AG04449 (cell line): ENCODE measurements at regions of chr1 and their contacts with region 1.

Region 1: DNA sequence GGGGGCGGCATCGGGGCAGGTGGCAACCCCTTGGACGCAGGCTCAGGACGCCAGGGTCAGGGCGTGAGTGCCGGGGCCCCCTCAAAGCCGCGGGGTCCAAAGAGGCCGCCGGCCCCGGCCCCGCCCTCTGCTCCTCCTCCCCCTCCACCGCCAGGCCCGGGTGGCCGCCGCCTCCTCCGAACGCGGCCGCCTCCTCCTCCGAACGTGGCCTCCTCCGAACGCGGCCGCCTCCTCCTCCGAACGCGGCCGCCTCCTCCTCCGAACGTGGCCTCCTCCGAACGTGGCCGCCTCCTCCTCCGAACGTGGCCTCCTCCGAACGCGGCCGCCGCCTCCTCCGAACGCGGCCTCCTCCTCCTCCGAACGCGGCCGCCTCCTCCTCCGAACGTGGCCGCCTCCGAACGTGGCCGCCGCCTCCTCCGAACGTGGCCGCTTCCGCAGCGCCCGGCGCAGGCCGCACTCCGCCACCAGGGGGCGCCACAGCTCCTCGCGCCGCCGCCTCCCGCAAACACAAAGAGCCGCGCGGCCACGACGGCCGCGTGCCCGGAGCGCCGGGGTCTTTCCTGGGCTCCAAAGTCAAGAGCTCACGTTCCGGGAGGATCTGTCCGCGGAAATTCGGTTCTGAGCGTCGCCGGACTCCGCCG is 19.3 kb upstream of the SAMD11 start:
- DNase-seq: no peak
- H3K4me3 ChIP-seq: peak overlapping the region; percentile 57
- CTCF ChIP-seq: peak; percentile 84

Region 2: DNA sequence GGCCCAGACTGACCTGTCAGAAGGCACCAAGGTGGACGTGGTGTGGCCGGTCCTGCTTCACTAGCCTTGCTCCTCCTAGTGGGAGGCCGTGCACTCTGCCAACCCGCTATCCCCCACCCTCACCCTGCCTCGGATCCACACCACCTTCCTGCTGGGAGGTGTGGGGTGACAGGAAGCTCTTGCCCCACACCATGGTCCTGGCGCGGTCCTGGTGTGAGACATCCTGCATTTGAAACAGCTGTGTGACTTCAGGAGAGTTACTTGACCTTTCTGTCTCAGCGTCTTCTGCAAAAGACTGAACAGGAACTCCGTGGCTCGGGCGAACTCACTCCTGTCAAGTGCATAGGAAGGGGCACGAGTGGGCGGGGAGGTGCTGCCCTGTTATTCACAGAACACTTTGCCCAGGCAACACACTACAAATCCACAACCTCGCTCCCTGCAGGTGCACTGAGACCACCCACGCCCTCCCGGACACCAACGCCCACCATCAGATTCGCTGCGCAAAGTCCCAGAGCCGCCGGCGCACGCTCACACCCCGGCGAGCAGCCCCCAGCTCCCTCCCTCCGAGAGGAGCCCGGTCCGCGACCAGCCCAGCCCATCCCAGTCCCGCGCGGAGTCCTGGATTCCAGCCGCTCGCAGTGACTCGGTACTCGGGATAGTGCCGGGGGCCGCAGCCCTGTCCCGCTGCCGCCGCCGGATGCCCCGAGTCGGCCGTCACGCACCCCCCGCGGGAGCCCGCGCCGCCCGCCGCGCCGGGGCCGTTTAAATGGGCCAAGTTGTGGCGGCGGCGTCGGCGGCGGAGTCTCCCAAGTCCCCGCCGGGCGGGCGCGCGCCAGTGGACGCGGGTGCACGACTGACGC is 18.9 kb after region 1 on chr1 and contains the start of gene SAMD11:
- CTCF ChIA-PET with region 1: interaction called, 27 read pairs
- POLR2A ChIA-PET with region 1: interaction called, 3 read pairs
- DNase-seq: peak; percentile 17
- H3K4me3 ChIP-seq: peak within 1 kb of the TSS; percentile 59
- CTCF ChIP-seq: no peak

Region 3: DNA sequence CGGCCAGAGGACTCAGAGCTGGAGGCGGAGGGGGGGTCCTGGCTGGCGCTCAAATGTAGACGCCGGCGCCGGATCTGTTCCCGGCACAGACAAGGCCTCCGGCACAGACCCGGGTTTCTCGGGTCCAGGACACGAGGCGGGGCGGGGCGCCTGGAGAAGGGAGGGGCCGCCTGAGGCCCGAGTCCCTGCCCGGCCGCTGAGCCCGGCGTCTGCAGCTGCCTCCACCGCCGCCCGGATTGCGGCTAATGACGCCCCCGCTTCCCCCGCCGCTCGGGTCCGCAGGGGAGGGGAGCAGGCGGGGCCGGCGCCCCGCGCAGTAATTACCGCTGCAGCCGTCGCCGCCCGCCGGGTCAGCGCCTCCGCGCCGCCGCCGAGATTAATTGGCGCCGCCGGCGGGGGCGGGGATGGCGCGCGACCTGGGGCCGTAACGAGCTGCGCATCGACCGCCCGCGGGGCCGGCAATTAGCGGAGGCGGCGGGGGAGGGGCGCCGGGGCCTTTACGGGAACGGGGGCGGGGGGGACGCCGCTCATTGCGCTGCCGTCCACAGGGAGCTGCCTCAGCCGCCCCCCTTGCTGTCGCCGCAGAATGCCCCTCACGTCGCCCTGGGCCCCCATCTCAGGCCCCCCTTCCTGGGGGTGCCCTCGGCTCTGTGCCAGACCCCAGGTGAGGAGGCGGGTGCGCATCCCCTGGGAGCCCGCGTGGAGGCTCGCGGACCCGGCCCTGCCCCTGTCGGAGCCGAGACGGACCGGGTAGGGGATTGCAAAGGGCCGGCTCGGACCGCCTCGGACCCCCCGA is 37.4 kb after region 1 on chr1:
- CTCF ChIA-PET with region 1: interaction called, 67 read pairs
- POLR2A ChIA-PET with region 1: no interaction called
- DNase-seq: no peak
- H3K4me3 ChIP-seq: peak overlapping the region; percentile 36
- CTCF ChIP-seq: no peak

Region 4: GRCh38 chr1:983799-984473 is 79.5 kb after region 1 on chr1:
- CTCF ChIA-PET with region 1: interaction called, 23 read pairs
- POLR2A ChIA-PET with region 1: no interaction called
- DNase-seq: no peak
- H3K4me3 ChIP-seq: peak overlapping the region; percentile 40
- CTCF ChIP-seq: peak; percentile 91

Region 5: GRCh38 chr1:1157426-1157913 is 253.0 kb after region 1 on chr1:
- CTCF ChIA-PET with region 1: no interaction called
- POLR2A ChIA-PET with region 1: no interaction called
- DNase-seq: peak; percentile 24
- H3K4me3 ChIP-seq: peak overlapping the region; percentile 57
- CTCF ChIP-seq: no peak